Natural killer cell (primary cell): ENCODE measurements at regions of chr11 and their contacts with region 1.

Region 1: GRCh38 chr11:72222907-72223614 is 1.5 kb upstream of the INPPL1 start:
- DNase-seq: peak; percentile 84 to 95
- ATAC-seq: peak; percentile 68 to 87 (median 76)
- H3K4me3 ChIP-seq: peak overlapping the region; percentile 92
- H3K4me3 Mint-ChIP-seq: peak overlapping the region; percentile 88
- H3K27ac ChIP-seq: peak overlapping the region; percentile 76
- H3K27ac Mint-ChIP-seq: peak overlapping the region; percentile 85 to 95
- H3K4me1 ChIP-seq: peaks cover 54% of the 10 kb centered on the region
- H3K4me1 Mint-ChIP-seq: peaks cover 20 to 54% of the 10 kb centered on the region in 2 donors
- H3K27me3 ChIP-seq: no peaks in the 10 kb centered on the region
- H3K27me3 Mint-ChIP-seq: no peaks in the 10 kb centered on the region
- CTCF ChIP-seq: no peak

Region 2: GRCh38 chr11:72179804-72180396 is 43.2 kb before region 1 on chr11:
- intact Hi-C with region 1: loop called (anchors 1 kb)
- DNase-seq: no peak
- ATAC-seq: no peak
- H3K4me3 ChIP-seq: no peak overlapping the region
- H3K4me3 Mint-ChIP-seq: no peak overlapping the region
- H3K27ac ChIP-seq: no peak overlapping the region
- H3K27ac Mint-ChIP-seq: no peak overlapping the region
- H3K4me1 ChIP-seq: no peaks in the 10 kb centered on the region
- H3K4me1 Mint-ChIP-seq: peaks cover 6 to 9% of the 10 kb centered on the region in 2 donors
- H3K27me3 ChIP-seq: no peaks in the 10 kb centered on the region
- H3K27me3 Mint-ChIP-seq: peaks cover 9 to 23% of the 10 kb centered on the region in 2 donors
- CTCF ChIP-seq: no peak

Region 3: GRCh38 chr11:72238040-72238450 is 15.0 kb after region 1 on chr11:
- intact Hi-C with region 1: loop called (anchors 2 kb)
- DNase-seq: peak in 1 of 2 donors; percentile 70
- ATAC-seq: peak; percentile 61 to 75 (median 67)
- H3K4me3 ChIP-seq: no peak overlapping the region
- H3K4me3 Mint-ChIP-seq: no peak overlapping the region
- H3K27ac ChIP-seq: no peak overlapping the region
- H3K27ac Mint-ChIP-seq: no peak overlapping the region
- H3K4me1 ChIP-seq: peaks cover 21% of the 10 kb centered on the region
- H3K4me1 Mint-ChIP-seq: peaks cover 18 to 47% of the 10 kb centered on the region in 2 donors
- H3K27me3 ChIP-seq: peaks cover 24% of the 10 kb centered on the region
- H3K27me3 Mint-ChIP-seq: peaks cover 28 to 31% of the 10 kb centered on the region in 2 donors
- CTCF ChIP-seq: peak; percentile 48